Colonic mucosa (tissue), 4 donors: ENCODE measurements at regions of chr6 and their contacts with region 1.

Region 1: GRCh38 chr6:2999618-3000557 is at the start of gene NQO2:
- DNase-seq: peak; percentile 98
- H3K4me3 ChIP-seq: peak within 1 kb of the TSS; percentile 86
- H3K27ac ChIP-seq: peak within 1 kb of the TSS; percentile 70
- H3K4me1 ChIP-seq: peaks cover 5% of the 10 kb centered on the region
- H3K27me3 ChIP-seq: no peaks in the 10 kb centered on the region
- CTCF ChIP-seq: no peak
- total RNA-seq, gene NQO2: 14.1 to 19.0 TPM

Region 2: GRCh38 chr6:2547355-2547754 is 452.5 kb before region 1 on chr6:
- intact Hi-C with region 1: no loop called
- DNase-seq: no peak
- H3K4me3 ChIP-seq: no peak overlapping the region
- H3K27ac ChIP-seq: no peak overlapping the region
- H3K4me1 ChIP-seq: peaks cover 9% of the 10 kb centered on the region
- H3K27me3 ChIP-seq: no peaks in the 10 kb centered on the region
- CTCF ChIP-seq: no peak

Region 3: DNA sequence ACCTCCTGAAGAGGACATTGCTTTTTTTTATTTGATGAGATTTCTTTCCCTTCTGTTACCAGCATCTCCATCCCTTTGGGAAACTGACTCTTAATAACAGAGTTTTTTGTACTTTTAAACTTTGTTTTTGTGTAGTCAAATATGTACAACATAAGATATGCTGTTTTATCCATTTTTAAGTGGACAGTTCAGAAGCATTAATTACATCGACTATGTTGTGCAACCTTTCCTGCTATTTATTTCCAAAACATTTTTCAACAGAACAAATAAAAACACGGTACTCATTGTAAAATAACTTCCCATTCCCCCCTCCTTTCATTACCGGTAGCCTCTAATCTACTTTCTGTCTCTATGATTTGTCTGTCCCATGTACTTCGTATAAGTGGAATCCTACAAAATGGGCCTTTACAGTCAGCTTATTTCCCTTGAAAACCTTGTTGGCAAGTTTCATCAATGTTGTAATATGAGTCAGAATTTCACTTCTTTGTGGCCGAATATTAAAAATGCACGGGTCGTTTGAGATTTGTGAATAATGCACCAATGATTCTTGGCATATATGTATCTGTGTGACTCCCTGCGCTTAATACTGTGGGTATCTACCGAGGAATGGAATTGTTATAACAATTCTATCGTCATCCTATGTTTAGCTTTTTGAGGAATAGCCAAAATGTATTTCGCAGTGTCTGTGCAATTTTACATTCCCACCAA is 57.3 kb after region 1 on chr6:
- intact Hi-C with region 1: loop called (anchors 2 kb)
- DNase-seq: no peak
- H3K4me3 ChIP-seq: no peak overlapping the region
- H3K27ac ChIP-seq: no peak overlapping the region
- H3K4me1 ChIP-seq: no peaks in the 10 kb centered on the region
- H3K27me3 ChIP-seq: no peaks in the 10 kb centered on the region
- CTCF ChIP-seq: no peak